ENCODE measurements at regions of chr6 and their contacts with region 1.

Region 1: DNA sequence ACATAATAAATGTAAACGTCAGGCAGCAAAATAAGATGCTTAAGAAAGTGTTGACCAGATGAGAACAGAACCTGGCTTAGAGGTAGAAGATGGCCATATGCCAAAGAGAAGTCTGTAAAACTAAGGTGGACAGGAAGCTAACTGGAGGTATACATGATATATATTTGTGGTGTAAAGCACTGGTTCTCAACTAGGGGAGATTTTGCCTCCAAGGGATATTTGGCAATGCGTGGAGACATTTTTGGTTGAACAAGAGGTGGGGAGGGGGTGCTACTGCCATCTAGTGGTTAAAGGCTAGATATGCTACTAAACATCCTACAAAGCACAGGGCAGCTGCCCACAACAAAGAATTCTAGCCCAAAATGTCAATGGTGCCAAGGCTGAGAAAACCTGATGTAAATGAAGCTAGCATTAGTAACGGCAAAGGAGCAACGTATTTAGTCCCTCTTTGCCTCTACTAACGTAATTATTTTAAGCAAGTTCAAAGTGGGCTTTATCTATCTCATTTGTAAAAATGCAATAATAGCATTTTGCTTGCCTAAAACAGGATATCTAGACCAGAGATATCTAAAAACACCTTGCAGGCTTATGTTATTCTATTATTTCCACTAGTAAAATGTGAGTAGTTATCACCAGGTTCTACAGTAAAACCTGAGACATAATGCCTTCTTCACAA is 182.6 kb downstream of the RNGTT start:
- DNase-seq: peak; percentile 64
- ATAC-seq: peak; percentile 71
- H3K4me3 ChIP-seq: no peak overlapping the region
- H3K27ac ChIP-seq: no peak overlapping the region
- H3K4me1 ChIP-seq: no peaks in the 10 kb centered on the region
- H3K27me3 ChIP-seq: no peaks in the 10 kb centered on the region
- CTCF ChIP-seq: peak; percentile 81

Region 2: GRCh38 chr6:87929843-87930288 is 851.0 kb before region 1 on chr6:
- CTCF ChIA-PET with region 1: no interaction called
- POLR2A ChIA-PET with region 1: no interaction called
- intact Hi-C with region 1: loop called (anchors 1 kb)
- DNase-seq: peak; percentile 75
- ATAC-seq: peak; percentile 99
- H3K4me3 ChIP-seq: no peak overlapping the region
- H3K27ac ChIP-seq: no peak overlapping the region
- H3K4me1 ChIP-seq: no peaks in the 10 kb centered on the region
- H3K27me3 ChIP-seq: 0 out of 2 replicates have a peak, but pooled peaks cover 3% of the 10 kb centered on the region
- CTCF ChIP-seq: peak; percentile 79

Measured in PC-3 (cell line).